CD4-positive, alpha-beta memory T cell (primary cell): ENCODE measurements at regions of chr21 and their contacts with region 1.

Region 1: GRCh38 chr21:25528510-25528909 is 78.8 kb downstream of the MRPL39 start:
- DNase-seq: no peak
- H3K4me3 ChIP-seq: no peak overlapping the region
- H3K4me3 Mint-ChIP-seq: no peak overlapping the region
- H3K27ac ChIP-seq: no peak overlapping the region
- H3K27ac Mint-ChIP-seq: no peak overlapping the region
- H3K4me1 ChIP-seq: no peaks in the 10 kb centered on the region
- H3K4me1 Mint-ChIP-seq: no peaks in the 10 kb centered on the region
- H3K27me3 ChIP-seq: no peaks in the 10 kb centered on the region
- H3K27me3 Mint-ChIP-seq: no peaks in the 10 kb centered on the region

Region 2: GRCh38 chr21:25539606-25540005 is 11.1 kb after region 1 on chr21:
- CTCF ChIA-PET with region 1: no interaction called
- POLR2A ChIA-PET with region 1: no interaction called
- intact Hi-C with region 1: loop called (anchors 1 kb)
- DNase-seq: no peak
- H3K4me3 ChIP-seq: no peak overlapping the region
- H3K4me3 Mint-ChIP-seq: no peak overlapping the region
- H3K27ac ChIP-seq: no peak overlapping the region
- H3K27ac Mint-ChIP-seq: no peak overlapping the region
- H3K4me1 ChIP-seq: no peaks in the 10 kb centered on the region
- H3K4me1 Mint-ChIP-seq: no peaks in the 10 kb centered on the region
- H3K27me3 ChIP-seq: no peaks in the 10 kb centered on the region
- H3K27me3 Mint-ChIP-seq: no peaks in the 10 kb centered on the region